OCI-LY7 (cell line): ENCODE measurements at regions of chr12 and their contacts with region 1.

Region 1: GRCh38 chr12:47742253-47742825 is 16.3 kb downstream of the RAPGEF3 start:
- DNase-seq: peak; percentile 67
- H3K4me3 ChIP-seq: no peak overlapping the region
- H3K27ac ChIP-seq: no peak overlapping the region
- H3K4me1 ChIP-seq: peaks cover 44% of the 10 kb centered on the region
- CTCF ChIP-seq: peak; percentile 99

Region 2: DNA sequence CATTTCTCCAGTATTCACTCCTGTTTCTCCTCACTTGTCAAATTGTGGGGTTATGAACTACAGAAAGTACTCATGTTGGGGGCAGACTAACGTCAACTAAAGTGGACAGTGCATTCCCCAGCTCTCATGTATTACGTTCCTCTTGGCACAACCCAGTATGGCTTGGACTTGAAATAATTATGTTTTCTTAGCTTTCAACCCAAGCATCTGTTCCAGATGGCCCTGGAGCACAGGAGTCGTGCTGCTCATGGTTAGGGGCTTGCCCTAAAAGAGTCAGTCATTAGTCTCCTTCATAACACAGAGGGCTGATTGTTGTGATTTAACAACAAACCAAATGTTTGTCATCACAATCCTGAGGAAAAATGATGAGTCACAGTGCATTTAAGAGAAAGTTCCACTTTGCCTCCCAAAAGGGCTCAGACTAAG is 190.9 kb before region 1 on chr12:
- CTCF ChIA-PET with region 1: no interaction called
- POLR2A ChIA-PET with region 1: no interaction called
- intact Hi-C with region 1: no loop called
- DNase-seq: no peak
- H3K4me3 ChIP-seq: no peak overlapping the region
- H3K27ac ChIP-seq: no peak overlapping the region
- H3K4me1 ChIP-seq: no peaks in the 10 kb centered on the region
- CTCF ChIP-seq: no peak

Region 3: GRCh38 chr12:47715393-47715876 is 26.9 kb before region 1 on chr12:
- CTCF ChIA-PET with region 1: interaction called, 15 read pairs
- POLR2A ChIA-PET with region 1: interaction called, 3 read pairs
- intact Hi-C with region 1: loop called (anchors 1 kb)
- DNase-seq: peak; percentile 91
- H3K4me3 ChIP-seq: no peak overlapping the region
- H3K27ac ChIP-seq: no peak overlapping the region
- H3K4me1 ChIP-seq: peaks cover 20% of the 10 kb centered on the region
- CTCF ChIP-seq: peak; percentile 93

Region 4: GRCh38 chr12:47758834-47759690 is 16.7 kb after region 1 on chr12 and contains the start of gene RAPGEF3:
- CTCF ChIA-PET with region 1: interaction called, 16 read pairs
- POLR2A ChIA-PET with region 1: interaction called, 44 read pairs
- intact Hi-C with region 1: loop called (anchors 1 kb)
- DNase-seq: peak; percentile 78
- H3K4me3 ChIP-seq: peak within 1 kb of the TSS; percentile 70
- H3K27ac ChIP-seq: no peak within 1 kb of the TSS
- H3K4me1 ChIP-seq: peaks cover 39% of the 10 kb centered on the region
- CTCF ChIP-seq: peak; percentile 68
- total RNA-seq, gene RAPGEF3: 0.69 and 0.80 TPM in 2 replicates

Region 5: DNA sequence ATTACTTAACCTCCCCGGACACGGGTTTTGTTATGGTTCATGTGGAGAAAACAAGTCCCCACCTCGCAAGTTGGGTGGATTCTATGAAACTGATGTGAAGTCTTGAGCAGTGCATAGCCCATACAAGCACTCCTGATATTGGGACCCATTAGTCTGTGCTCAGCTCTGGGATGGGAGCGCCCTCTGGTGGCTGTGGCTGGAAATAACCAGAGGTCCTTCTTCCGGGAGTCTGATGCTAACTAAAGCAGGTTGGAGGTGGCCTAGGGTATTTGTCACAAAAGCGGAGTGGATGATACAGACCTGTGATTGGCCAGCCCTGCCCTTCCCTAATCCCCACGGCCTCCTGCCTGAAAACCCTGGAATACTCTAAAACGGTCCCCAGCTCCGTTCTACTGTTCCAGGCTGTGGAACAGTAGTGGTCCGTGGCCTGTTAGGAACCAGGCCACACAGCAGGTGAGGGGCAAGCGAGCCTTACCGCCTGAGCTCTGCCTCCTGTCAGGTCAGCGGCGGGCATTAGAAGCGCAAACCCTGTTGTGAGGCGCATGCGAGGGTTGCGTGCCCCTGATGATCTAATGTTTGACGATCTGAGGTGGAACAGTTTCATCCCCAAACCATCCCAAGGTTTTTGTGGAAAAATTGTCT is 37.1 kb after region 1 on chr12:
- CTCF ChIA-PET with region 1: interaction called, 13 read pairs
- POLR2A ChIA-PET with region 1: interaction called, 5 read pairs
- intact Hi-C with region 1: loop called (anchors 1 kb)
- DNase-seq: peak; percentile 89
- H3K4me3 ChIP-seq: no peak overlapping the region
- H3K27ac ChIP-seq: no peak overlapping the region
- H3K4me1 ChIP-seq: peaks cover 42% of the 10 kb centered on the region
- CTCF ChIP-seq: peak; percentile 97

Region 6: GRCh38 chr12:48078901-48079300 is 336.6 kb after region 1 on chr12:
- CTCF ChIA-PET with region 1: no interaction called
- POLR2A ChIA-PET with region 1: no interaction called
- intact Hi-C with region 1: no loop called
- DNase-seq: no peak
- H3K4me3 ChIP-seq: no peak overlapping the region
- H3K27ac ChIP-seq: no peak overlapping the region
- H3K4me1 ChIP-seq: no peaks in the 10 kb centered on the region
- CTCF ChIP-seq: no peak